ENCODE measurements at regions of chr22 and their contacts with region 1.

Region 1: GRCh38 chr22:41832553-41833368 is at the start of gene SREBF2:
- DNase-seq: peak; percentile 93 to 99 (median 98)
- ATAC-seq: peak; percentile 92 to 94
- H3K4me3 Mint-ChIP-seq: peak within 1 kb of the TSS; percentile 91 to 98 (median 95)
- H3K27ac Mint-ChIP-seq: peak within 1 kb of the TSS; percentile 94 to 100 (median 99)
- H3K4me1 Mint-ChIP-seq: peaks cover 22 to 38% (median 26%) of the 10 kb centered on the region in 4 donors
- H3K27me3 Mint-ChIP-seq: no peaks in the 10 kb centered on the region
- polyA plus RNA-seq, gene SREBF2: 16.3 to 21.9 (median 18.2) TPM

Region 2: GRCh38 chr22:41780746-41781505 is 51.8 kb before region 1 on chr22:
- POLR2A ChIA-PET with region 1: interaction called, 45 read pairs
- DNase-seq: peak; percentile 69 to 98 (median 92)
- ATAC-seq: peak; percentile 95
- H3K4me3 Mint-ChIP-seq: peak overlapping the region; percentile 80 to 93 (median 87)
- H3K27ac Mint-ChIP-seq: peak overlapping the region; percentile 98 to 100 (median 99)
- H3K4me1 Mint-ChIP-seq: peaks cover 29 to 69% (median 56%) of the 10 kb centered on the region in 4 donors
- H3K27me3 Mint-ChIP-seq: no peaks in the 10 kb centered on the region

Region 3: DNA sequence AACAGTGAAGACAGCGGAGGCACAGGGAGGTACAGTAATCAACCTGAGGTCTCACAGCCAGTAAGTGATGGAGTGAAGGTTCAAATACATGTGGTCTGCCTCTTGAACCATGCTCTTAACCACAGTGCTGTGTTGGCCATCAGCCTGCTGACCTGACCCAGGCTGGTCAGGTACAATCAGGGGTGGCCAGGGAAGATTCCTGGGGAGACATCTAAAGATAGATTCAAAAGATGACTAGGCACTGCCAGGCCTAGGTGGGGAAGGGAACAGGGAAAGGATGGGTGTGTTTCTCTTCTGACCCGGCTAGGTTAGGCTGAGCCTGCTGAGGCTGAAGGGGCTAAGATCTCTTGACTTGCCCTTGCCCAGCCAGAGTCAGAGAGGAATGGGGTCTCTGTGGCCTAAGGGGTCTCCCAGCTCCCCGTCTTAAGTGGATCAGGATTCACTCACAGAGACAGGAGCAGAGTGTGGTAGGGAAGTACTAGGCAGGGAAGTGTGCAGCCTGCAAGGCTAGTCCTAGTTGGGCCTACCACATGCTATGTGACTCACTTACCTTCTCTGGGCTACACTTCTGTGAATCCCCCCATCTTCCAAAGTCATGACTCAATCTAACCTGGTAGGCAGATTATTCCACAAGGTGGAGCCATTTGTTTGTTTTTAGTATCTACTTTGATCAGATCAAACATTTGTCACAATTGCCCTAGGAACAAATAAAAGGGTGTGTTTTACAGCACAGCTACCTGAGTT is 10.3 kb before region 1 on chr22:
- POLR2A ChIA-PET with region 1: interaction called, 11 read pairs
- DNase-seq: peak in 8 of 10 donors; percentile 17 to 76 (median 60)
- ATAC-seq: peak; percentile 93 to 96
- H3K4me3 Mint-ChIP-seq: no peak overlapping the region
- H3K27ac Mint-ChIP-seq: peak overlapping the region; percentile 67 to 90 (median 80)
- H3K4me1 Mint-ChIP-seq: peaks cover 9 to 18% (median 14%) of the 10 kb centered on the region in 4 donors
- H3K27me3 Mint-ChIP-seq: no peaks in the 10 kb centered on the region

Region 4: DNA sequence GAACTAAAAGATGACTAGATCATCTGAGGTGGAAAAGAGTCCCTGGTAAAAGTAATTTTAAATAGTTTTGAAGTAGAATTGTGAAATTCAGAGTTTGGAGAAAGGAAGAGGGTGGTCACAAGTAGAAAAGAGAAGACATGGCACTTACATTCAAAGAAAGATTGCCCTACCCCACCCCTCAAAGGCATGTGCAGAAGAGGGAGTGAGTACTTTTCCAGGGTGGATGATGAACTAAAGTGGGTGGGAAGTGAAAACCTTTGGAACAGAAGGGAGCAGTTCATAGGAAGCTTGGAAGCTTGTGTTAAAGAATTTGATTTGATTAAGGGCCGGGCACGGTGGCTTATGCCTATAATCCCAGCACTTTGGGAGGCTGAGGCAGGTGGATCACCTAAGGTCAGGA is 23.7 kb after region 1 on chr22:
- POLR2A ChIA-PET with region 1: interaction called, 16 read pairs
- DNase-seq: no peak
- ATAC-seq: no peak
- H3K4me3 Mint-ChIP-seq: no peak overlapping the region
- H3K27ac Mint-ChIP-seq: peak overlapping the region in 9 of 10 donors; percentile 6 to 89 (median 78)
- H3K4me1 Mint-ChIP-seq: peaks cover 19 to 68% (median 44%) of the 10 kb centered on the region in 4 donors
- H3K27me3 Mint-ChIP-seq: no peaks in the 10 kb centered on the region

Region 5: DNA sequence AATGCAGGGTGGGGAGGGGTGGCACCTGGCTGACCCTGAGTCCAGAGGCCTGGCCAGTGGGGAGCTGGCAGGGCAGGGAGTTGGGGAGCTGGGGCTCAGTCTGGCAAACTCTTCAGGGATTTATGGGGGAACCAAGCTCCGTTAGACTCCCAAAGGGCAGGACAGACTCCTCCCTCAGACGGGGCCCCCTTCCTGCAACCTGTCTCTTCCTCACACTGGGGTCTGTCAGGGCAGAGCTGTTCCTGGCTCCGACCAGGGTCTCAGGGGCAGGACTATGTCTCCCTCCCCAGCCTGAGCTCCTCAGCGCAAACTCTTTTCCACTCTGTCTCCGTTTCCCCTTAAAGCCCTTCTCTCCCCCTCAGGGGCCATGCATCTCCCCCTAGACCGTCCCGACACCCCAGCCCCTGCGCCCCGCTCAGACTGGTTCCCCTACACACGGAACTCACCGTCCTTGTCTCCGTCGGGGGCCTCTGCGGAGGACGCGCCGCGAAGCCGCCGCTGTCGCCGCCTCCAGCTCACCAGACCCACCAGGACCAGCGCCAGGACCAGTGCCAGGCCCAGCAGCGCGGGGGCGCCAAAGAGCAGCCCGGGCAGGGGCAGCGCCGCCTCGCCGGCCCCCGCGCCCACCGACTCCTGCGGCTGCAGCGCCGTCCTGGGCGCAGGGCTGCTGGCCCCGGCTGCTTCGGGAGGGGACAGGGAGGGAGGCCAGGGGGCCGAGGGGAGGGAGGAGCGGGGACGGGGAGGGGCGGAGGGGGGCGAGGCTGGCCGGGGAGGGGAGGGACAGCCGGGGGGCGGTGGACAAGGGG is 93.1 kb after region 1 on chr22:
- POLR2A ChIA-PET with region 1: interaction called, 17 read pairs
- DNase-seq: peak; percentile 63 to 88 (median 74)
- ATAC-seq: peak; percentile 83
- H3K4me3 Mint-ChIP-seq: peak overlapping the region; percentile 69 to 89 (median 81)
- H3K27ac Mint-ChIP-seq: peak overlapping the region in 8 of 10 donors; percentile 44 to 88 (median 67)
- H3K4me1 Mint-ChIP-seq: peaks cover 14 to 43% (median 29%) of the 10 kb centered on the region in 4 donors
- H3K27me3 Mint-ChIP-seq: peaks cover 0 to 3% (median 2%) of the 10 kb centered on the region in 5 donors

Measured in naive thymus-derived CD8-positive, alpha-beta T cell (primary cell).